ENCODE measurements at regions of chr10 and their contacts with region 1.

Region 1: GRCh38 chr10:74081192-74081803 is 69.3 kb downstream of the AP3M1 start:
- DNase-seq: no peak
- ATAC-seq: peak; percentile 49

Region 2: DNA sequence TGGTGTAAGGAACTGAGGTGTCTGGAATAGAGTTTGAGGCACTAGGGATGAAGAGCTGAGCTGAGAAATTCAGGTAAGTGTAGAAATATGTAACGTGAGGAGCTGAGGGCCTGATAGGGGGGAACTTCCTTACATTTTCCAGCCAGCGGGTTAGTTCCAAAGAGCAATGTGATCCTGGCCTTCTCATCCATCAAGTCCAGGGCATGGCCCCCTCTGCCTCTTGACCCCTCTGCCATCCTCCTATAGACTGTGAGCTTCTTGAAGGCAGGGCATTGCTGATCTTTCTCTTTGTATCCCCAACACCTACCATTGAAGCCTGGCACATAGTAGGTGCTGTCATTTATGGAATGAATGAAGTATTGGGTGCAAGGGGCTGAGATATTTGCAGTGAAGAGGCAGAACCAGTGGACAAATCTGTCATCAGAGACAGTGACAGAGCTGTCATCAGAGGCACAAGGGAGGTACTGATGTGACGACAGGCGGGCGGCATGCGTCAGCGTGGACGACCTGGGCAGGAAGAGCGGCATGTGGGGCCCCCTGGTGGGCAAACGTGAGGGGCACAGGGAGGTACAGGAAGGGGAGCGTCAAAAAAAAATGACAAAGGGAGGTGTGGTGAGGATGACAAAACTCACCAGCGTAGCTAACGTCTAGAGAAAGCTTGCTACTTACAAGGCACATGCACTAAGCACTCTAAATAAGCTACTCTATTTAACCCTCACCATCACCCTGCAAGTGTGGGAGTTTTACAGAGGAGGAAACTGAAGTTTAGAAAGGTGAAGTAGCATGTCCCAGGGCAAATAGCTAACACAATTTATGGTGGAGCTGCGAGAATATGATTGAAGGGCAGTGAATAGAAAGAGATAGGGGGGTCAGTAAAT is 201.8 kb before region 1 on chr10:
- intact Hi-C with region 1: loop called (anchors 5 kb)
- DNase-seq: peak; percentile 96
- ATAC-seq: peak; percentile 86

Region 3: GRCh38 chr10:73886085-73886529 is 195.2 kb before region 1 on chr10:
- intact Hi-C with region 1: loop called (anchors 5 kb)
- DNase-seq: peak; percentile 77
- ATAC-seq: peak; percentile 89

Region 4: DNA sequence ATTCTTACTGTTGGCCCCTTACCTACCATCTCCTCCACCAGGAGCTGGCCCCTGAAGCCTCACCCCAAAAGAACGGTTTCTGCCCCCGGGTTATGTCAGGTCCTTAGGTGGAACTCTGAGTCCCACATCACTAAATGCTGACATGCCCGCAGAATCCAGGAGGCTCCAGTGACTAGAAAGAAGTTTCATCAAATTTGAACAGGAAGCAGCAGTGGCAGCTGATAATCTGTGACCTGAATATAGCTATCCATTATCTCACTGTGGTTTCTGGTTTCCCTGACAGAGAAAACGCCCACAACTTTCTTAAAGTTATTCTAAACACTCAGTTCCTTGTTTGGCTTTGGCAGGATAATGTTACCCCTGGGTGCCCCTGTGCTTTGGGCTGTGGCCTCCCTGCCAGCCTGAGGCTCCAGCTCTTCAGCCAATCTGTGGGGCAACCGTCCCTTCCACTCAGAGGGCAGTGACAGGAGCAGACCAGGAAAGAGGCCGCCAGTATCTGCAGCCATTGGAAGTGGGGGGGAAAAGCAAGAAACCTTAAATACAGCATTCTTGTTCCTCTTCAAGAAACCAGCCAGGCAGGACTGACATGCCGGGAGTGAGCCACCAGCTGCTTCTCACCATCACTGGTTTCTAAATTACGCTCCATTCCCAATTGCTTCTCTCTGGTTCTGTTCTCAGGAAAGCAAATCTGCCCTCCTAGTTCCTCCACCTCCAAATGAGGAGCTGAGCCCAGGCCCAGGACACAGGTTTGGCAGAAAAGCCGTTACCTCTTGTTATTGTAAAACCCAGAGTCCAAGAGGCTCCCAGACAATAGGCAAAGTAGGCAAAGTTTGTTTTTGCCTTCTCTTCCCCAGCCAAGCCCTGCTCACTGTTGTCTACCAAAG is 124.6 kb before region 1 on chr10:
- intact Hi-C with region 1: loop called (anchors 5 kb)
- DNase-seq: no peak
- ATAC-seq: peak; percentile 56

Region 5: GRCh38 chr10:74035303-74035702 is 46.0 kb before region 1 on chr10:
- intact Hi-C with region 1: loop called (anchors 5 kb)
- DNase-seq: no peak
- ATAC-seq: no peak

Measured in Right ventricle myocardium inferior (tissue), 1 donor.